ENCODE measurements at regions of chr19 and their contacts with region 1.

Region 1: GRCh38 chr19:19956434-19957075 is 55.8 kb downstream of the ZNF93 start:
- DNase-seq: peak in 28 of 42 donors; percentile 5 to 67 (median 42)

Region 2: DNA sequence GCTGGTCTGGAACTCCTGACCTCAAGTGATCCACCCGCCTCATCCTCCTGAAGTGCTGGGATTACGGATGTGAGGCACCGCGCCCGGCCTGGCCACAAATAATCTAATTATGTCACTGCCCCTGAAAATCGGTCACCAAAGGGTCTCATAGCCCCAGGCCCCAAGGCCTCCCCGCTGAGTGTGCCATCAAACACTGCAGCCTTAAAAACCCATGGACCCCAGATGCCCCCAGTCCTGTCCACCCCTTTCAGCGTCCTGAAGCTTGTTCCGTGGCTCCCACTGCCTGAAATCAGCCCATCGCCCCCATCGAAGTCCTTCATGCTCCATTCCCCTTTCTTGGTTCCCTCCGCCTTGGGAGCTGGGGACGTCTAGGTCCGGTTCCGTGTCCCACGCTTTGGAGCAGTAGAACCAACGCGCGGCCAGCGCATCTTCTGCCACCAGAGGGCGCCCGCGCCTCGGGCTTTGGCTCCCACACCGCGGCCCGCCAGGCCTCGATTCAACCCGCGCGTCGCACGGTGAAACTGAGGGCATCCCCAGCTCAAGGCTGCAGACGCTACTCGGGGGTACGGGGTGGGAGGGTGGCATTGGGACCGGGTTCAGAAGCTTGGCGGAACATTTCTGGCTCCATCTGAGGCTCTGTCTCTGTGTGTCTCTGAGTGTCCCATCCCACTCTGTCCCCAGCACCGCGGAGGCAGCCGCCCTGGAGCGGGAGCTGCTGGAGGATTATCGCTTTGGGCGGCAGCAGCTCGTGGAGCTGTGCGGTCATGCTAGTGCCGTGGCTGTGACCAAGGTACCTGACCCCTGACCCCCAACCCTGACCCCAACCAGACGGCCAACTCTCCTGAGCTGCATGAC is 424.4 kb before region 1 on chr19:
- intact Hi-C with region 1: loop called (anchors 5 kb)
- DNase-seq: peak; percentile 77 to 97 (median 90)

Region 3: DNA sequence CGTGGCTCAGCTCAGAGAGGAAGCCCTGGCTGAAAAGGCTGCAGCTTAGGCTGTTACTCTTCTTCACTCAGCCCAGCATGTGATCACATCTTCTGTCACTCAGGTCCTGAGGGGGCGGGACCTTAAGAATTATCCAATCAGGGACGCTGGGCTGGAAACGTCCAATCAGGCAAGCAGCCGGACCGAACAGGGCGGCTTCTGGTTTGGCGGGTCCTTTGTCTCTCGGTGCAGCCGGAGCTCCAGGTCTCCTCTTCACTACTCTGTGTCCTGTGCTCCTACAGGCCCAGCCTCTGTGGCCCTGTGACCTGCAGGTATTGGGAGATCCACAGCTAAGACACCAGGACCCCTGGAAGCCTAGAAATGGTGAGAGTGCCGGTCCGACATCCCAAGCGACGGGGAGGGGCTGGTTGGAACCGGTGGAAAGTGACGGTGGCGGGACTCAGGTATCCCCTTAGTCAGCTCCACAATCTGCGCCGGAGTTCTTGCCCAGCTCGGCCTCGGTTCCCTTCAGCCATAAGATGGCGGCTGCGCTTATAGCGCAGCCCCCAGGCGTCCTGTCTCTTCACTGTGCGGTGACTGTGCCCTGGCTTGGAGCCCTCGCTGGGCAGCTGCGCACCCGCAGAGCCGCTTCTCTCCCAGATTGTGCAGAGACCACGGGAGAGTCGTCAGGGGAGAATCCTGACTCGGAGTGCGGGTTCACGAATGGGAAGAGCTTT is 55.7 kb before region 1 on chr19 and contains the start of gene ZNF93:
- intact Hi-C with region 1: loop called (anchors 10 kb)
- DNase-seq: peak; percentile 85 to 98 (median 95)